ENCODE measurements at regions of chr3 and their contacts with region 1.

Region 1: GRCh38 chr3:97821810-97822775 is at the start of gene CRYBG3:
- DNase-seq: peak; percentile 78
- H3K4me3 Mint-ChIP-seq: peak within 1 kb of the TSS; percentile 91
- H3K27ac Mint-ChIP-seq: peak within 1 kb of the TSS; percentile 81
- H3K4me1 Mint-ChIP-seq: peaks cover 22% of the 10 kb centered on the region
- H3K27me3 Mint-ChIP-seq: no peaks in the 10 kb centered on the region
- CTCF ChIP-seq: no peak
- total RNA-seq, gene CRYBG3: 7.2 and 10.7 TPM in 2 replicates

Region 2: DNA sequence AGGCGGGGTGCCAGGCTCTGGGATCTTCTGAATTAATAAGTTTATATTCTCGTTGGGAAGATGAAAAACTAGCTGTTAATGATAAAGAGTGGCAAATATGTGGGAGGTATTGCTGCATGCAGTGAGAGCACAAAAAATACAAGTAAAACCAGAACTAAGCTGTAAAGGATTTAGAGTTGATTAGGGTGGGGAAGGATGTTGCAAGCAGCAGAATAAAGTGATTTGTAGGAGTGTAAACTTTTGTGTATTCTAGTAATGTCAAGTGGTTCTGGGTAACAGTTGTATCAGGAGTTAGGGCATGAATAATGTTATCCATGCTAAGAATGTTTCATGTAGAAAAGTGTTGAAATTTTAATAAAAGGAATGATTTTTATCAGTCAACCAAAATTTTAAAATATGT is 17.9 kb after region 1 on chr3:
- CTCF ChIA-PET with region 1: interaction called, 6 read pairs
- POLR2A ChIA-PET with region 1: interaction called, 12 read pairs
- intact Hi-C with region 1: no loop called
- DNase-seq: no peak
- H3K4me3 Mint-ChIP-seq: no peak overlapping the region
- H3K27ac Mint-ChIP-seq: no peak overlapping the region
- H3K4me1 Mint-ChIP-seq: peaks cover 6% of the 10 kb centered on the region
- H3K27me3 Mint-ChIP-seq: no peaks in the 10 kb centered on the region
- CTCF ChIP-seq: no peak

Region 3: GRCh38 chr3:97871801-97872524 is 49.9 kb after region 1 on chr3:
- CTCF ChIA-PET with region 1: interaction called, 11 read pairs
- POLR2A ChIA-PET with region 1: interaction called, 64 read pairs
- intact Hi-C with region 1: loop called (anchors 1 kb)
- DNase-seq: peak; percentile 83
- H3K4me3 Mint-ChIP-seq: peak overlapping the region; percentile 60
- H3K27ac Mint-ChIP-seq: peak overlapping the region; percentile 92
- H3K4me1 Mint-ChIP-seq: peaks cover 32% of the 10 kb centered on the region
- H3K27me3 Mint-ChIP-seq: no peaks in the 10 kb centered on the region
- CTCF ChIP-seq: no peak

Region 4: GRCh38 chr3:97914390-97914789 is 92.3 kb after region 1 on chr3:
- CTCF ChIA-PET with region 1: interaction called, 4 read pairs
- POLR2A ChIA-PET with region 1: interaction called, 7 read pairs
- intact Hi-C with region 1: loop called (anchors 2 kb)
- DNase-seq: peak; percentile 94
- H3K4me3 Mint-ChIP-seq: no peak overlapping the region
- H3K27ac Mint-ChIP-seq: peak overlapping the region; percentile 39
- H3K4me1 Mint-ChIP-seq: peaks cover 20% of the 10 kb centered on the region
- H3K27me3 Mint-ChIP-seq: no peaks in the 10 kb centered on the region
- CTCF ChIP-seq: no peak

Region 5: DNA sequence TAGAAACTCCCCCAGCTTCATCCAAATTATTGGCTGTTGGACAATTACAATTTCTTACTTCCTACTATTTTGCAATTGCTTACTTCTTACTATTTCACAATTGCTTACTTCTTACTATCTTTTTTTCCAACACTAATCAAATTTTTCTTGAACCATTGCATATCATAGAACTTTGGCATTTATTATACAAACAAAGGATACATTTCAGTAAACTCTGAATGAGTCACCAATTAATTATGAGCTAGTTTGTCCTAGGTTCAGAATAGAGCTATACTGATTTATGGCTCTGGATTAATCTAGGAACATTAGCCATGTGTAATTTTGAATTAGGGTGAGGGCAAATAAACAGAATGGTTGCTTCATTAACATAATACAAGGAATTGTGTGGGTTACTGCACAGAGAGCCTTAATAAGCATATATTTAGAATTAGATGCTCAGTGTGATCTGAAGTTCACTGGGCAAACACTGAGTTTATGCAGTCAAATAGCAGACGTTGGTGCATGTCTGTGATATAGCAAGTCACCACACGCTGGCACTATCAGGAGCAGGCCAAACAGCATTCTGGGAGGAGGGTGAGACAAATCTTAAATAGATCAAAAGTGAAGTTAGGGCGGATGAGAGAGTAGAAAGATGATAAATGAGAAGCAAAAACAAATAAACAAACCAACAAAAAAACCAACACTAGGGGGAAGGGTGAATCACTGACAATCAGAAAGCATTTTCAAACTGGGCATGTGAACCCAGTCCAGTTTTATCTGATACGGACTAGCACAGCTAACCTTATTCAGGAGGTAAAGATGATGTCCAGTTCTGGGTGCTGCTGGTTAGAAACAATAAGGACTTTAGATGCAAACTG is 191.5 kb after region 1 on chr3:
- CTCF ChIA-PET with region 1: interaction called, 12 read pairs
- POLR2A ChIA-PET with region 1: interaction called, 7 read pairs
- intact Hi-C with region 1: no loop called
- DNase-seq: peak; percentile 21
- H3K4me3 Mint-ChIP-seq: no peak overlapping the region
- H3K27ac Mint-ChIP-seq: no peak overlapping the region
- H3K4me1 Mint-ChIP-seq: peaks cover 11% of the 10 kb centered on the region
- H3K27me3 Mint-ChIP-seq: no peaks in the 10 kb centered on the region
- CTCF ChIP-seq: no peak

Region 6: DNA sequence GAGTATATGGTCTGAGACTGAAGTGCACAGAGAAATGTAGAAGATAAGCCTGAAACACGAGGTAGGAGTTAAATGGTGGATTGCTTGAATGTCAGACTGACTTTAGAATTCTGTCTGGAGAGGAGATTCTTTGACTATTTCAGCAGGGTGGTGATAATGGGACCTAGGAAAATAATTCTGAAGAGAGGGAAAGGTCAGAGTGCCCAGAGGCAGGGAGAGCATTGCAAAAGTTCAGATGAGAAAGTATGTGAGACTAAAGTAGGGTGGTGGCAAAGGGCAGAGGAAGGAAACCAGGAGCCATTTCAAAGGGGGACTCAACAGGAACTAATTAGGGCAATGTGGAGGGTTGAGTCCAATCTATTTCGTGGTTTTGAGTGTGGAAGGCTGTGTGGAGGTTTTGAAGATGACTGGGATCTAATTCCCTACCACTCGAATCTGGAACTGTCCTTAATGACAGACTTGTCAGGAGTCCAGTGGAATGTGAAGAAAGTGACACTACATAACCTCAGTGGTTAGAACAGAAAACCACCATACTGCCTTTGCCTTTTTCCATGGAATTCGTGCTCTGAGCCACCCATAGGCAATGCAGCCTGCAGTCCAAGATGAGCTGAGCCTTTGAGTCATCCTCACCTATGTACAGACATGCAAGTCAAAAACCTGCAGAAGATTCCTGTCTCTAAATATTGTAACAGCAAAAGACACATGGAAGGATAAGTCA is 755.2 kb after region 1 on chr3:
- CTCF ChIA-PET with region 1: no interaction called
- POLR2A ChIA-PET with region 1: no interaction called
- intact Hi-C with region 1: no loop called
- DNase-seq: no peak
- H3K4me3 Mint-ChIP-seq: no peak overlapping the region
- H3K27ac Mint-ChIP-seq: peak overlapping the region; percentile 11
- H3K4me1 Mint-ChIP-seq: peaks cover 15% of the 10 kb centered on the region
- H3K27me3 Mint-ChIP-seq: no peaks in the 10 kb centered on the region
- CTCF ChIP-seq: no peak